ENCODE measurements at regions of chrX and their contacts with region 1.

Region 1: GRCh38 chrX:46796574-46797191 is 37.8 kb upstream of the SLC9A7 start:
- DNase-seq: peak; percentile 57
- H3K4me3 ChIP-seq: no peak overlapping the region
- H3K27ac ChIP-seq: no peak overlapping the region
- H3K4me1 ChIP-seq: peaks cover 15% of the 10 kb centered on the region
- H3K27me3 ChIP-seq: no peaks in the 10 kb centered on the region
- CTCF ChIP-seq: peak; percentile 85 to 96

Region 2: DNA sequence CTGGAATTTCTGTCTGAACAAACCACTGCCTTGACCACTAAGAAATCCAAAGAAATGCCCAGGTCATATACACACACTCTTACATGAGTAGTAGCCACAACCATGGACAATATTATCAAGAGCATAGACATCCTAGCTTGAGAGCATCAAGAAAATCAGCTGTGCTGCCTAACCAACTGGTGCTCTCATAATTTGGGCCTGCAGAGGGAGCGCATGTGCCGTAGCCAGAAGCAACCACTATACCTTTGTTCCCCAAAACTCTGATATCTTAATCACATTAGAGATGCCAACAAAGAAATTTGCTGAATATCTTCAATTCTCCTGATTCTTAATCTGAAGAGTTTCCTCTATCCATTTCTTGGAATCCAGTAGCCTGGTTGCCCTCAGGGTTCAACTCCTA is 415.1 kb before region 1 on chrX:
- CTCF ChIA-PET with region 1: interaction called, 3 read pairs
- dilution Hi-C with region 1: no loop called
- in situ Hi-C with region 1: no loop called
- intact Hi-C with region 1: loop called (anchors 2 kb)
- DNase-seq: peak; percentile 11
- H3K4me3 ChIP-seq: no peak overlapping the region
- H3K27ac ChIP-seq: no peak overlapping the region
- H3K4me1 ChIP-seq: no peaks in the 10 kb centered on the region
- H3K27me3 ChIP-seq: no peaks in the 10 kb centered on the region
- CTCF ChIP-seq: peak; percentile 65 to 72

Region 3: DNA sequence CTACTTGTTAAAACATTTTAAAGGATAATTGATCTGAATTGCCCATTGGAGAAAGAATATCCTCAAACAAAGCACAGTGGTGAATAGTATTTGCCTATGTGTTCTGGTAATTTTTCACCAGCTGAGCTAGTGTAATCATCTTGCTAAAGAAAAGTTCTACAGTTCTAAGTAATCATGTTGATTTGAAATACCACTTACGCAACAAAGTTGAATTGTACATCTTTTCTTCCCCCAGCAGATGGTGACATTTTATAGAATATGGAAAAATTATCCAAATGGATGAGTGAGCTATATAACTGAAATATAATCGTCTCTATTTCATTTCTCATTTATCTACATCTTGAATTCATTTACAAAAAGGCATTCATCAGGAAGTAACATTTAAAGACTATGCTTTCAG is 241.7 kb before region 1 on chrX:
- CTCF ChIA-PET with region 1: interaction called, 13 read pairs
- dilution Hi-C with region 1: no loop called
- in situ Hi-C with region 1: no loop called
- intact Hi-C with region 1: loop called (anchors 1 kb)
- DNase-seq: no peak
- H3K4me3 ChIP-seq: no peak overlapping the region
- H3K27ac ChIP-seq: no peak overlapping the region
- H3K4me1 ChIP-seq: no peaks in the 10 kb centered on the region
- H3K27me3 ChIP-seq: no peaks in the 10 kb centered on the region
- CTCF ChIP-seq: peak; percentile 23 to 46

Region 4: GRCh38 chrX:46653482-46653881 is 143.2 kb before region 1 on chrX:
- CTCF ChIA-PET with region 1: no interaction called
- dilution Hi-C with region 1: no loop called
- in situ Hi-C with region 1: no loop called
- intact Hi-C with region 1: loop called (anchors 1 kb)
- DNase-seq: no peak
- H3K4me3 ChIP-seq: no peak overlapping the region
- H3K27ac ChIP-seq: no peak overlapping the region
- H3K4me1 ChIP-seq: peaks cover 8% of the 10 kb centered on the region
- H3K27me3 ChIP-seq: no peaks in the 10 kb centered on the region
- CTCF ChIP-seq: peak; percentile 41 to 63

Region 5: DNA sequence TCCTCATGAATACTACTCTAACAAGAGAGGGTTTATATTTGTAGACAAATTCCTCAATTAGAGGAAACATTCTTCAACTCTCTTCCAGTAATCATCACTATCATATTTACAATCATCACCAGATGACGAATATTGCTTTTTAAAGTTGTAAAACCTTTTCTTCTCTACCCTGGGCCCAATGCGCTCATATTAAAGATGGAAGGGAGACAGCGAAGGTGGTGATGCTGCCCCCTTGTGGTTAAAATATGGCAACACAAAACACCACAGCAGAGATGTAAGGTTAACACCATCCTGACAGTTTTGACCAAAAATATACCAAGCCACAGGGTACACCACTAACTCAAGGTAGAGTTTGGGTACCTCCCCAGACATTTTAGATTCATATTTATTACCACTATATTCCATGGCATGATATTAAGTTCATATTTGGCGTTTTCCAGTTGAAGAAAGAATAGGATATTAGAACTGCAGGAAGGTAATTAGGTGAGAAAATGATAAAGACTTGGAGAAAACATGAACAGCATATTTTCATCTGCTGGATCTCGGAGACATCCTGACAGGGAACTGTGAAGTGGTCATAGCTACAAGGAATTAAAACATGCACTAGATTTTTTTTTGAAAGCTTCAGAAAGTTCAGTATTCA is 110.6 kb before region 1 on chrX:
- CTCF ChIA-PET with region 1: no interaction called
- dilution Hi-C with region 1: loop called (anchors 5 kb)
- in situ Hi-C with region 1: no loop called
- intact Hi-C with region 1: loop called (anchors 1 kb)
- DNase-seq: peak; percentile 24
- H3K4me3 ChIP-seq: no peak overlapping the region
- H3K27ac ChIP-seq: no peak overlapping the region
- H3K4me1 ChIP-seq: peaks cover 10% of the 10 kb centered on the region
- H3K27me3 ChIP-seq: peaks cover 3% of the 10 kb centered on the region
- CTCF ChIP-seq: peak; percentile 73 to 74

Region 6: DNA sequence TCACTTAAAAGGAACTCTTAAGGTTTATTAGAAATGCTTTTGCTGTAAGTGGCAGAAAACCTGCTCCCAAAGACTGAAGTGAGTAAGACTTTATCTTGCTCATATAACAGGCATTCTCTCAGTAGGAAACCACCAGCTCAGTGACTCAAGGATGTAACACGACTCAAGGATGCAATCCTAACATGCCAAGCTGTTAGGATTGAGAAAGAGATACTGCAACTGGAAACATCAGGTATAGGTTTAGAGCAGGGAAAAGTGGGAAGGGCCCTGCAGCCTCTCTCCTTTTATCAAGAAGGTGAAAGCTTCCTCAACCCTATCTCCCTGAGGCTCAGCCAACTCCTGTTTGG is 25.9 kb before region 1 on chrX:
- CTCF ChIA-PET with region 1: no interaction called
- dilution Hi-C with region 1: no loop called
- in situ Hi-C with region 1: no loop called
- intact Hi-C with region 1: loop called (anchors 1 kb)
- DNase-seq: peak; percentile 88
- H3K4me3 ChIP-seq: no peak overlapping the region
- H3K27ac ChIP-seq: peak overlapping the region; percentile 65
- H3K4me1 ChIP-seq: peaks cover 18% of the 10 kb centered on the region
- H3K27me3 ChIP-seq: no peaks in the 10 kb centered on the region
- CTCF ChIP-seq: no peak

Region 7: GRCh38 chrX:46953597-46953996 is 156.9 kb after region 1 on chrX:
- CTCF ChIA-PET with region 1: no interaction called
- dilution Hi-C with region 1: no loop called
- in situ Hi-C with region 1: no loop called
- intact Hi-C with region 1: no loop called
- DNase-seq: no peak
- H3K4me3 ChIP-seq: no peak overlapping the region
- H3K27ac ChIP-seq: no peak overlapping the region
- H3K4me1 ChIP-seq: no peaks in the 10 kb centered on the region
- H3K27me3 ChIP-seq: no peaks in the 10 kb centered on the region
- CTCF ChIP-seq: no peak